B cell (primary cell): ENCODE measurements at regions of chr1 and their contacts with region 1.

Region 1: DNA sequence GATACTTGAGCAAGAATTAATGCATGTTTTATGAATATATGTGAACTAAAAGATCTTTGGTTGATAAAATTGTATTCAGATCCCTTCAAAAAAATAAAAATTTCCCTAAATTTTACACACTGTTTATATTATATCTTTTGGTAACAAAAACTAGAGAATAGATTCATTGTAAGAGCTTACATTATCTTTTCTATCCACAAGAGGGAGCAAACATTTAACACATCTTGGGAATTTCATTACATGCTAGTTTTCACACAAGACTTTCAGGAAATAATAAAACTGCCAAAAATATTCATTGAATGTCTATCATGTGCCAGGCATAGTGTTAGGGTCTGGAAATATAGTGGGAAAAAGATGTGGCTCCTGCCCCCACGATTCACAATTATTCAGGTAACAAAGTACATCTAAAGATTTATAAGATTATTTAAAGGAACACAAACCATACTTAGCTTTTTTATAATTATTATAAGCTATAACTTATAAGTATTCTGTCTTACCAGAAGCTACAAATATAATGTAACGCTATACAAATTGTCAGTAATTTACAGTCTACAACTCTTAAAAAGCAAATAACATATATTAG is 30.6 kb downstream of the FAF1 start:
- DNase-seq: peak; percentile 46
- ATAC-seq: no peak
- H3K4me3 ChIP-seq: no peak overlapping the region
- H3K4me3 Mint-ChIP-seq: no peak overlapping the region
- H3K27ac ChIP-seq: no peak overlapping the region
- H3K27ac Mint-ChIP-seq: no peak overlapping the region
- H3K4me1 ChIP-seq: no peaks in the 10 kb centered on the region
- H3K4me1 Mint-ChIP-seq: peaks cover 19% of the 10 kb centered on the region
- H3K27me3 ChIP-seq: no peaks in the 10 kb centered on the region
- H3K27me3 Mint-ChIP-seq: no peaks in the 10 kb centered on the region
- CTCF ChIP-seq: peak; percentile 81

Region 2: GRCh38 chr1:50774759-50775351 is 154.6 kb before region 1 on chr1:
- CTCF ChIA-PET with region 1: interaction called, 12 read pairs
- POLR2A ChIA-PET with region 1: no interaction called
- intact Hi-C with region 1: no loop called
- DNase-seq: peak; percentile 61
- ATAC-seq: no peak
- H3K4me3 ChIP-seq: no peak overlapping the region
- H3K4me3 Mint-ChIP-seq: no peak overlapping the region
- H3K27ac ChIP-seq: no peak overlapping the region
- H3K27ac Mint-ChIP-seq: no peak overlapping the region
- H3K4me1 ChIP-seq: peaks cover 3% of the 10 kb centered on the region in 2 donors
- H3K4me1 Mint-ChIP-seq: peaks cover 5% of the 10 kb centered on the region
- H3K27me3 ChIP-seq: no peaks in the 10 kb centered on the region
- H3K27me3 Mint-ChIP-seq: no peaks in the 10 kb centered on the region
- CTCF ChIP-seq: peak; percentile 91

Region 3: GRCh38 chr1:50832167-50832566 is 97.3 kb before region 1 on chr1:
- CTCF ChIA-PET with region 1: no interaction called
- POLR2A ChIA-PET with region 1: no interaction called
- intact Hi-C with region 1: no loop called
- DNase-seq: no peak
- ATAC-seq: no peak
- H3K4me3 ChIP-seq: no peak overlapping the region
- H3K4me3 Mint-ChIP-seq: no peak overlapping the region
- H3K27ac ChIP-seq: no peak overlapping the region
- H3K27ac Mint-ChIP-seq: no peak overlapping the region
- H3K4me1 ChIP-seq: no peaks in the 10 kb centered on the region
- H3K4me1 Mint-ChIP-seq: no peaks in the 10 kb centered on the region
- H3K27me3 ChIP-seq: no peaks in the 10 kb centered on the region
- H3K27me3 Mint-ChIP-seq: no peaks in the 10 kb centered on the region
- CTCF ChIP-seq: no peak

Region 4: DNA sequence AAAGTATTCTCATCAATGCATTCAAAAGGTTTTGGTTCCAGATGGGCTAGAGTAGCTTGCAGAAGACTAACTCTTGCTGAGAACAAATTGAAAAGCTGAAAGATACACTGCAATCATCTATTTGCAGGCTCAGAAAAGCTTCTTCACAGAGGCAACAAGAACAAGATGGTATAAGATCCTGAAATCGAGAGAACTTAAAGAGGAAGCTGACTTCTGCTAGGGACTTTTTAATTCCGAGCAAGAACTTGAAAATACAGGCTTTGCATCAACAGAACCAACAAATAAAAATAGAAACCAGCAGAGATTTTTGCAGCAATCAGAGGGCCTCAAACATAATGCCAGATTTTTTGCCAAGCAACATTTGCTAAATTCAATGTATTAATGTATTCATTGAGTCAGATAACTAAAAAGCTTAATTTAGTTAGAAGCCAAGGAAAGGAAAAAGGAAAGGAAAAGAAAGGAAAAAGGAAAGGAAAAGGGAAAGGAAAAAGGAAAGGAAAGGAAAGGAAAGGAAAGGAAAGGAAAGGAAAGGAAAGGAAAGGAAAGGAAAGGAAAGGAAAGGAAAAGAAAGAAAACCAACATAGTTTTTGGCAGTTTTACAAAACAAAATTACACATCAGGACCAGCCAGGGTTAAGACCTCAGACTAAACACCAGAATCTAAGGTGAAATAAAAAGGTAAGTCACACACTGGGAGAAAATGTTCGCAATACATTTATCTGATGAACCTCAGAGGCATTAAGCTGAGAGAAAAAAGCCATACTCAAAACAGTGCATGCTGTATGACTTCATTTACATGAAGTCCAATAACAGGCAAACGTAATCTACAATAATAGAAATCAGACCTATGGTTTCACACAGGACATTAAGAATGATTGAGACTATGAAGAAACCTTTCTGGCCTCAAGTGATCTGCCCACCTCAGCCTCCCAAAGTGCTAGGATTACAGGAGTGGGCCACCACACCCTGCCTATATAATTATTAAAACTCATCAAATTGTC is 12.0 kb before region 1 on chr1:
- CTCF ChIA-PET with region 1: interaction called, 18 read pairs
- POLR2A ChIA-PET with region 1: no interaction called
- intact Hi-C with region 1: no loop called
- DNase-seq: peak; percentile 56
- ATAC-seq: peak; percentile 64
- H3K4me3 ChIP-seq: peak overlapping the region in 1 of 5 experiments; percentile 31
- H3K4me3 Mint-ChIP-seq: peak overlapping the region; percentile 74
- H3K27ac ChIP-seq: peak overlapping the region; percentile 45 to 78
- H3K27ac Mint-ChIP-seq: peak overlapping the region; percentile 92
- H3K4me1 ChIP-seq: peaks cover 18 to 20% of the 10 kb centered on the region in 2 donors
- H3K4me1 Mint-ChIP-seq: peaks cover 26% of the 10 kb centered on the region
- H3K27me3 ChIP-seq: no peaks in the 10 kb centered on the region
- H3K27me3 Mint-ChIP-seq: no peaks in the 10 kb centered on the region
- CTCF ChIP-seq: no peak

Region 5: DNA sequence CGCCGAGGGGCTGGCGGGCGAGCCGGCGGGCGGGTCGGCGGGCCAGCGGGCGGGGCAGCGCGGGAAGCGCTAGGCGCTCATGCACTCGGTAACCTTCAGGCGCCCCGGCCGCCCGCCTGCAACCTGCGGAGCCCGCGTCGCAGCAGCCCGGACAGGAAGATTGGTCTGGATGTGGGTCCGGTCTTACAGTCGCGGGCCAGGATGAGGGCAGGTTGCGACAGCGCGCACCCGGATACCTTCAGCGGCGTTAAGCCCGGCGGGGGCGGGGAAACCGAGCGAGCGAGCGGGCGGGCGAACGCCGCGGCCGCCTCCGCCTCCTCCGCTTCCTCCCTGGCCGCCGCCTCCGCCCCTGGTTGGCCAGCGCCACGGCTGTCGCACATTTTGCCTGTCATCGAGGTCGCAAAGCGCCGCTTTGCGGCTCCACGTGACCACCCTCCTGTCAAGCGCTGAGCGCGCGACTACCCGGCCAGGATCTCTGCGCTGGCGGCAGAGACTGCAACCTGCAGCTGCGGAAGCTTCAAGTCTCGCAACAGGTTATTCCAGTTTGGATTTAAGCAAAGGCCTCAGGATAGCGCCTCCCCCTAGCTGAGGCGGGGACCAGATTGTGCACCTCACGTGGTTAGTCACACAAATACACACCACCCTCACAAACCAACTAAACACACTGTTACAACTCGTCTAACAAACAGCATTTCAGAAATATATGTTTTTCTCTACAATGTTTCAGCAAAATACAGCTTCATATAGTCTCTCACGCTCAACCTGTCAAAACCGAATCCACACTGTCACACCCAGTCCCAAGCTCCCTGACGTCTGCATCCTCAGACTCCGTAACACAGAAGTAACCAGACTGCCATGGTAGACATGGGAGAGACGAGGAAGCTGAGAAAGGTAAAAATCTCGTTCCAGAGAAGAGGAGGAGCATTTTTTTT is 30.7 kb after region 1 on chr1 and contains the start of gene FAF1:
- CTCF ChIA-PET with region 1: interaction called, 17 read pairs
- POLR2A ChIA-PET with region 1: no interaction called
- intact Hi-C with region 1: no loop called
- DNase-seq: peak; percentile 99
- ATAC-seq: peak; percentile 92
- H3K4me3 ChIP-seq: peak within 1 kb of the TSS; percentile 69 to 94 (median 78)
- H3K4me3 Mint-ChIP-seq: peak within 1 kb of the TSS; percentile 94
- H3K27ac ChIP-seq: peak within 1 kb of the TSS; percentile 67 to 76
- H3K27ac Mint-ChIP-seq: peak within 1 kb of the TSS; percentile 99
- H3K4me1 ChIP-seq: peaks cover 18 to 19% of the 10 kb centered on the region in 2 donors
- H3K4me1 Mint-ChIP-seq: peaks cover 24% of the 10 kb centered on the region
- H3K27me3 ChIP-seq: no peaks in the 10 kb centered on the region
- H3K27me3 Mint-ChIP-seq: no peaks in the 10 kb centered on the region
- CTCF ChIP-seq: peak; percentile 24
- total RNA-seq, gene FAF1: 58.4 and 61.1 TPM in 2 replicates

Region 6: DNA sequence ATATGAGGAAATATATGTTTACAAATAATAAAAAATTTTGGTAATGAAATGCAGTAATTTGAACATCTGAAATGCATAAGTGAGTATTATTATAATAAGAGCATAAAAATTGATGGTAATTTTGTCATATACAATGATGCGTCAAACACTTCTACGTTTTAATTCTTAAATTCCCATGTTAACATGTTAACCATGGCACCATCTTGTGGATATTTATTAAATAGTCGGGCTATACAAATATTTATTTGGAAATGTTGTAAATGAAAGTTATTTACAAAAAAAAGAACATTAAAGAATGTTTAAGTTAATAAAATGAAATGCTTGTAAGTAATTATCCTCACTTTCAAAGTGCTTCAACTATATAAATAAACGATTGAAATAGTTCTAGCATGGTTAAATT is 115.4 kb after region 1 on chr1:
- CTCF ChIA-PET with region 1: interaction called, 7 read pairs
- POLR2A ChIA-PET with region 1: no interaction called
- intact Hi-C with region 1: loop called (anchors 2 kb)
- DNase-seq: peak; percentile 16
- ATAC-seq: no peak
- H3K4me3 ChIP-seq: no peak overlapping the region
- H3K4me3 Mint-ChIP-seq: no peak overlapping the region
- H3K27ac ChIP-seq: no peak overlapping the region
- H3K27ac Mint-ChIP-seq: no peak overlapping the region
- H3K4me1 ChIP-seq: no peaks in the 10 kb centered on the region
- H3K4me1 Mint-ChIP-seq: no peaks in the 10 kb centered on the region
- H3K27me3 ChIP-seq: no peaks in the 10 kb centered on the region
- H3K27me3 Mint-ChIP-seq: peaks cover 15% of the 10 kb centered on the region
- CTCF ChIP-seq: peak; percentile 49

Region 7: GRCh38 chr1:51070640-51071039 is 141.2 kb after region 1 on chr1:
- CTCF ChIA-PET with region 1: no interaction called
- POLR2A ChIA-PET with region 1: no interaction called
- intact Hi-C with region 1: no loop called
- DNase-seq: no peak
- ATAC-seq: no peak
- H3K4me3 ChIP-seq: no peak overlapping the region
- H3K4me3 Mint-ChIP-seq: no peak overlapping the region
- H3K27ac ChIP-seq: no peak overlapping the region
- H3K27ac Mint-ChIP-seq: no peak overlapping the region
- H3K4me1 ChIP-seq: no peaks in the 10 kb centered on the region
- H3K4me1 Mint-ChIP-seq: no peaks in the 10 kb centered on the region
- H3K27me3 ChIP-seq: peaks cover 0 to 5% (median 1%) of the 10 kb centered on the region in 4 experiments
- H3K27me3 Mint-ChIP-seq: peaks cover 49% of the 10 kb centered on the region
- CTCF ChIP-seq: no peak